ENCODE measurements at regions of chr1 and their contacts with region 1.

Region 1: GRCh38 chr1:207404849-207405525 is 49.1 kb upstream of the CR2 start:
- DNase-seq: no peak
- ATAC-seq: peak; percentile 78
- H3K4me3 Mint-ChIP-seq: no peak overlapping the region
- H3K27ac Mint-ChIP-seq: no peak overlapping the region
- H3K4me1 Mint-ChIP-seq: peaks cover 25% of the 10 kb centered on the region
- H3K27me3 Mint-ChIP-seq: no peaks in the 10 kb centered on the region

Region 2: GRCh38 chr1:207077470-207078377 is 327.3 kb before region 1 on chr1:
- CTCF ChIA-PET with region 1: interaction called, 36 read pairs
- POLR2A ChIA-PET with region 1: no interaction called
- intact Hi-C with region 1: no loop called
- DNase-seq: peak; percentile 76
- ATAC-seq: peak; percentile 92
- H3K4me3 Mint-ChIP-seq: no peak overlapping the region
- H3K27ac Mint-ChIP-seq: no peak overlapping the region
- H3K4me1 Mint-ChIP-seq: no peaks in the 10 kb centered on the region
- H3K27me3 Mint-ChIP-seq: peaks cover 8% of the 10 kb centered on the region

Region 3: DNA sequence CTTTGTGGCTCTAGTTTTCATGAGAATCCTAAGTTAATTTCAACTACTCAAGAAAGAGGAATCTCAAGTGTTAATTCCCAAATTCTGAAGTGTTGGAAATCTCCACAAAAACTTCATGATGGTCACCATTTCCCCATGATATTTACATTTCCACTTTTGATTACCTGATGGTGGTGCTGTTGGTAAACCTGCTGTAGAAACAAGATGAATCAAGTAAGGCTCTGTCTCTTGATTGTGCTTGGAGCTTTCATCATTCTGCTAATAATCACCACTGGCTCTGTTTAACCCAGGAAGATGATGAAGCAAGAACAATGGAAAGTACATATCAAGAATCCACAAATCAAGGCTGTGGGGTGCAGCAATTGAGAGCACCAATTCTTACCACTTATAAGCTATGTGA is 223.1 kb before region 1 on chr1:
- CTCF ChIA-PET with region 1: no interaction called
- POLR2A ChIA-PET with region 1: no interaction called
- intact Hi-C with region 1: loop called (anchors 5 kb)
- DNase-seq: no peak
- ATAC-seq: no peak
- H3K4me3 Mint-ChIP-seq: no peak overlapping the region
- H3K27ac Mint-ChIP-seq: no peak overlapping the region
- H3K4me1 Mint-ChIP-seq: no peaks in the 10 kb centered on the region
- H3K27me3 Mint-ChIP-seq: no peaks in the 10 kb centered on the region

Region 4: GRCh38 chr1:207362962-207363858 is 41.8 kb before region 1 on chr1:
- CTCF ChIA-PET with region 1: interaction called, 3 read pairs
- POLR2A ChIA-PET with region 1: no interaction called
- intact Hi-C with region 1: loop called in 1 of 2 experiments (anchors 1 kb)
- DNase-seq: peak; percentile 37
- ATAC-seq: peak; percentile 89
- H3K4me3 Mint-ChIP-seq: no peak overlapping the region
- H3K27ac Mint-ChIP-seq: no peak overlapping the region
- H3K4me1 Mint-ChIP-seq: peaks cover 2% of the 10 kb centered on the region
- H3K27me3 Mint-ChIP-seq: no peaks in the 10 kb centered on the region

Region 5: GRCh38 chr1:207470927-207471326 is 65.9 kb after region 1 on chr1:
- CTCF ChIA-PET with region 1: no interaction called
- POLR2A ChIA-PET with region 1: no interaction called
- intact Hi-C with region 1: no loop called
- DNase-seq: peak; percentile 10
- ATAC-seq: peak; percentile 94
- H3K4me3 Mint-ChIP-seq: no peak overlapping the region
- H3K27ac Mint-ChIP-seq: no peak overlapping the region
- H3K4me1 Mint-ChIP-seq: peaks cover 13% of the 10 kb centered on the region
- H3K27me3 Mint-ChIP-seq: peaks cover 5% of the 10 kb centered on the region